Activated CD4-positive, alpha-beta memory T cell treated with anti-CD3 and anti-CD28 coated beads for 36 hours (primary cell): ENCODE measurements at regions of chr9 and their contacts with region 1.

Region 1: DNA sequence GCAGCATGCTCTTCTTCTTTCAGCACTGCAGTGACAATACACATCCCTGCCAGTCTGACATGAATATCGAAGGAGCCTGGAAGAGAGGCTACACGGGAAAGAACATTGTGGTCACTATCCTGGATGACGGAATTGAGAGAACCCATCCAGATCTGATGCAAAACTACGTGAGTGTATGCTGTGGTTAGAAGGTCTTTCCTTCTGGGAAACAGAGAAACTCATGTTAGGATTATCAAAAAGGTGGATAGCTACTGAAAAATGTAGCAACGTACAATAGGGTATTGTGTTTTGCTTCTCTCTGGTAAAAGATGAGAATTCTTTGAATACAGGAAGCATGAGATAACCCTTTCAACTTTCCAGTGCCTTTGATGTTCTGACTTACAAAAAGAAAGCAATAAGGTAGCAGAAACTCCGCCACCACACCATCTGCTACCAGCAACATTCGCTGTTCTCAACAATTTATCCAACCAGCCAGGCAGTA is 133.3 kb downstream of the PCSK5 start:
- DNase-seq: peak; percentile 39
- H3K4me3 Mint-ChIP-seq: peak overlapping the region; percentile 53
- H3K27ac Mint-ChIP-seq: peak overlapping the region; percentile 20
- H3K4me1 Mint-ChIP-seq: peaks cover 78% of the 10 kb centered on the region
- H3K27me3 Mint-ChIP-seq: no peaks in the 10 kb centered on the region

Region 2: DNA sequence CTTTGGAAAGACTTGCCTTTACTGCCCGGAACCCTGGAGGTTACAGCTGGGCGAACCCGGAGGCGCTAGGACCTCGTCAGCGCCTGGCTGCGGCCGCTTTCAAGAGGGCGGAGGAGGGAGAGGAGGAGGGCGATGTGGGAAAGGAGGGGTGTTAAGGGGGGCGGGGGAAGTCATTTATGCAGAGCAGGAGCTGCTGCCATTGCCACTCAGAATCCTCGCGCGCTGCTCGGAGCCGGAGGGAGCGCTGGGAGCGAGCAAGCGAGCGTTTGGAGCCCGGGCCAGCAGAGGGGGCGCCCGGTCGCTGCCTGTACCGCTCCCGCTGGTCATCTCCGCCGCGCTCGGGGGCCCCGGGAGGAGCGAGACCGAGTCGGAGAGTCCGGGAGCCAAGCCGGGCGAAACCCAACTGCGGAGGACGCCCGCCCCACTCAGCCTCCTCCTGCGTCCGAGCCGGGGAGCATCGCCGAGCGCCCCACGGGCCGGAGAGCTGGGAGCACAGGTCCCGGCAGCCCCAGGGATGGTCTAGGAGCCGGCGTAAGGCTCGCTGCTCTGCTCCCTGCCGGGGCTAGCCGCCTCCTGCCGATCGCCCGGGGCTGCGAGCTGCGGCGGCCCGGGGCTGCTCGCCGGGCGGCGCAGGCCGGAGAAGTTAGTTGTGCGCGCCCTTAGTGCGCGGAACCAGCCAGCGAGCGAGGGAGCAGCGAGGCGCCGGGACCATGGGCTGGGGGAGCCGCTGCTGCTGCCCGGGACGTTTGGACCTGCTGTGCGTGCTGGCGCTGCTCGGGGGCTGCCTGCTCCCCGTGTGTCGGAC is 133.1 kb before region 1 on chr9 and contains the start of gene PCSK5:
- CTCF ChIA-PET with region 1: no interaction called
- POLR2A ChIA-PET with region 1: no interaction called
- intact Hi-C with region 1: loop called (anchors 5 kb)
- DNase-seq: peak; percentile 90
- H3K4me3 Mint-ChIP-seq: peak within 1 kb of the TSS; percentile 91
- H3K27ac Mint-ChIP-seq: peak within 1 kb of the TSS; percentile 61
- H3K4me1 Mint-ChIP-seq: peaks cover 28% of the 10 kb centered on the region
- H3K27me3 Mint-ChIP-seq: peaks cover 13% of the 10 kb centered on the region
- total RNA-seq, gene PCSK5: 2.0 to 2.1 TPM

Region 3: DNA sequence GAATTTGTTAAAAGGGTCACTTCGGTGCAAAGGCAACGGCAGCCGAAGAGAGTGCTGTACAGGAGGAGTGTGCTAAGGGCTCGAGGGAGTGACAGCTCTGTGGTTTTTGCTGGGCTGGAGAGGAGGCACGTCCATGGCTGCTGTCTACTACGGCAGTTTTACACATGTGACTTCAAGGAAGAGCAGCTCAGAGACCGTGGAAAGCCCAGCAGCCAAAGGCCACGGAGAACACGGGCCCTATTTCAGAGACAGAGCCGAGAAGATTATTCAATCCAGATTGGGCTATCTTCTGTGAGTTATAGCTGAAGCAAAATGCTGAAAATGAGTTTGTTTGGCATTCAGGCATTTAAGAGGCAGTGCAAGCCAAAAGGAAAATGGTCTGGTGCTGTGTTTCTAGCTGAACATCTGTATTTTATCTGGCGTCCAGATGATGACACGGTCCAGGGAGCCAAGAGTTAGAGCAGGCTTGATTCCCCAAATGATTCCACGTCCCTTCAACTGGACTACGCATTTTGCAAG is 274.0 kb after region 1 on chr9:
- CTCF ChIA-PET with region 1: no interaction called
- POLR2A ChIA-PET with region 1: no interaction called
- intact Hi-C with region 1: loop called (anchors 10 kb)
- DNase-seq: no peak
- H3K4me3 Mint-ChIP-seq: no peak overlapping the region
- H3K27ac Mint-ChIP-seq: no peak overlapping the region
- H3K4me1 Mint-ChIP-seq: peaks cover 3% of the 10 kb centered on the region
- H3K27me3 Mint-ChIP-seq: no peaks in the 10 kb centered on the region

Region 4: GRCh38 chr9:76502746-76503145 is 479.0 kb after region 1 on chr9:
- CTCF ChIA-PET with region 1: no interaction called
- POLR2A ChIA-PET with region 1: no interaction called
- intact Hi-C with region 1: no loop called
- DNase-seq: no peak
- H3K4me3 Mint-ChIP-seq: no peak overlapping the region
- H3K27ac Mint-ChIP-seq: no peak overlapping the region
- H3K4me1 Mint-ChIP-seq: no peaks in the 10 kb centered on the region
- H3K27me3 Mint-ChIP-seq: no peaks in the 10 kb centered on the region